Caco-2 (cell line): ENCODE measurements at regions of chr17 and their contacts with region 1.

Region 1: GRCh38 chr17:31508288-31509094 is 117.0 kb downstream of the RAB11FIP4 start:
- DNase-seq: peak in 1 of 2 experiments; percentile 54
- H3K4me3 ChIP-seq: no peak overlapping the region
- H3K4me3 Mint-ChIP-seq: no peak overlapping the region
- H3K27ac Mint-ChIP-seq: peak overlapping the region; percentile 82
- H3K4me1 ChIP-seq: peaks cover 26% of the 10 kb centered on the region
- H3K4me1 Mint-ChIP-seq: peaks cover 11% of the 10 kb centered on the region
- H3K27me3 ChIP-seq: no peaks in the 10 kb centered on the region
- H3K27me3 Mint-ChIP-seq: no peaks in the 10 kb centered on the region
- CTCF ChIP-seq: peak in 1 of 2 experiments; percentile 57

Region 2: GRCh38 chr17:31437720-31438420 is 70.6 kb before region 1 on chr17:
- CTCF ChIA-PET with region 1: interaction called, 10 read pairs
- POLR2A ChIA-PET with region 1: no interaction called
- intact Hi-C with region 1: loop called (anchors 1 kb)
- DNase-seq: no peak
- H3K4me3 ChIP-seq: no peak overlapping the region
- H3K4me3 Mint-ChIP-seq: no peak overlapping the region
- H3K27ac Mint-ChIP-seq: no peak overlapping the region
- H3K4me1 ChIP-seq: 0 out of 2 replicates have a peak, but pooled peaks cover 6% of the 10 kb centered on the region
- H3K4me1 Mint-ChIP-seq: no peaks in the 10 kb centered on the region
- H3K27me3 ChIP-seq: no peaks in the 10 kb centered on the region
- H3K27me3 Mint-ChIP-seq: no peaks in the 10 kb centered on the region
- CTCF ChIP-seq: no peak

Region 3: GRCh38 chr17:31475378-31476162 is 32.9 kb before region 1 on chr17:
- CTCF ChIA-PET with region 1: no interaction called
- POLR2A ChIA-PET with region 1: no interaction called
- intact Hi-C with region 1: no loop called
- DNase-seq: peak in 1 of 2 experiments; percentile 41
- H3K4me3 ChIP-seq: no peak overlapping the region
- H3K4me3 Mint-ChIP-seq: no peak overlapping the region
- H3K27ac Mint-ChIP-seq: no peak overlapping the region
- H3K4me1 ChIP-seq: peaks cover 7% of the 10 kb centered on the region
- H3K4me1 Mint-ChIP-seq: peaks cover 18% of the 10 kb centered on the region
- H3K27me3 ChIP-seq: no peaks in the 10 kb centered on the region
- H3K27me3 Mint-ChIP-seq: no peaks in the 10 kb centered on the region
- CTCF ChIP-seq: no peak

Region 4: GRCh38 chr17:31596382-31597323 is 88.2 kb after region 1 on chr17:
- CTCF ChIA-PET with region 1: no interaction called
- POLR2A ChIA-PET with region 1: no interaction called
- intact Hi-C with region 1: no loop called
- DNase-seq: no peak
- H3K4me3 ChIP-seq: no peak overlapping the region
- H3K4me3 Mint-ChIP-seq: no peak overlapping the region
- H3K27ac Mint-ChIP-seq: peak overlapping the region; percentile 40
- H3K4me1 ChIP-seq: peaks cover 23% of the 10 kb centered on the region
- H3K4me1 Mint-ChIP-seq: peaks cover 15% of the 10 kb centered on the region
- H3K27me3 ChIP-seq: no peaks in the 10 kb centered on the region
- H3K27me3 Mint-ChIP-seq: no peaks in the 10 kb centered on the region
- CTCF ChIP-seq: no peak